ENCODE measurements at regions of chr20 and their contacts with region 1.

Region 1: GRCh38 chr20:32902456-32903420 is 44.0 kb downstream of the EFCAB8 start:
- DNase-seq: peak; percentile 89
- H3K4me3 Mint-ChIP-seq: no peak overlapping the region
- H3K27ac Mint-ChIP-seq: no peak overlapping the region
- H3K4me1 Mint-ChIP-seq: peaks cover 6% of the 10 kb centered on the region
- H3K27me3 Mint-ChIP-seq: no peaks in the 10 kb centered on the region

Region 2: GRCh38 chr20:32626859-32627636 is 275.7 kb before region 1 on chr20:
- intact Hi-C with region 1: no loop called
- DNase-seq: no peak
- H3K4me3 Mint-ChIP-seq: no peak overlapping the region
- H3K27ac Mint-ChIP-seq: no peak overlapping the region
- H3K4me1 Mint-ChIP-seq: no peaks in the 10 kb centered on the region
- H3K27me3 Mint-ChIP-seq: peaks cover 3% of the 10 kb centered on the region

Region 3: DNA sequence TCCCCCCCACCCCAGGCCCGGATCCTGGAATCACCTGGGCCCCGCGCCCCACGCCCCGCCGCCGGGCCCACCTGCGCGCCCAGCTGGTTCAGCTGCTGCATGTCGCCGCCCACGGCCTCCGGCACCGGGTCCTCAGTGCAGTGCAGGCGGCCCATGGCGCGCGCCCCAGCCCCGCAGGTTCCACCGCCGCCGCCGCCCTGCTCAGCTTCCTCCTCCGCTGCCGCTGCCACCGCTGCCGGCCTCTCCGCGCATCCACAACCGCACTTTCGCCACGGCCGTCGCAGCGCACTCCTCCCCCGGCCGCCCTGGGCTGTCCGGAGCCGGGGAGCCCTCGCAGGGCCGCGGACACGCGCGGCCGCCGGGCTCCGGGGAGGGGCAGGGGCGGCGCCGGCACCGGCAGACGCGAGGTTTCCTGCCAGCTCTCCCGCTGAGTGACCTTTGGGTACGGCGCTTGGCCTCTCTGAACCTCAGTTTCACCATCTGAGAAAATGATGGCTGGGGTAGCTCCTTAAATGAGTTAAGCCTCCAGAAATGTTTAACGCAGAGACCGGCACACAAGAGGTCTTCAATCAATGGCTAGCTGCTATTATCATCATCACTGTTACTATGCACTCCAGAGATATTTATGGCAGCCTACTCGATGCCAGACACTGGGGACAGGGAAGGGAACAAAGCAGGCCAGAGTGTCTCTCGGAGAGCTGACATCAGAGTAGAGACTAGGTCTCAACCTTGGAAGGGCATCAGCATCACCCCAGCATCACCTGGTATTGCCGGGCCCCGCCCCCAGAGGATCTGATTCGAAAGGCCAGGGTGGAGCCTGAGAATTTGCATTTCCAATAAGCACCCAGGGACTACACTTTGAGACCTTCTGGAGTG is 159.3 kb before region 1 on chr20 and contains the start of gene COMMD7:
- intact Hi-C with region 1: no loop called
- DNase-seq: peak; percentile 92
- H3K4me3 Mint-ChIP-seq: peak within 1 kb of the TSS; percentile 93
- H3K27ac Mint-ChIP-seq: peak within 1 kb of the TSS; percentile 99
- H3K4me1 Mint-ChIP-seq: peaks cover 32% of the 10 kb centered on the region
- H3K27me3 Mint-ChIP-seq: no peaks in the 10 kb centered on the region
- total RNA-seq, gene COMMD7: 36.3 and 37.7 TPM in 2 replicates

Region 4: DNA sequence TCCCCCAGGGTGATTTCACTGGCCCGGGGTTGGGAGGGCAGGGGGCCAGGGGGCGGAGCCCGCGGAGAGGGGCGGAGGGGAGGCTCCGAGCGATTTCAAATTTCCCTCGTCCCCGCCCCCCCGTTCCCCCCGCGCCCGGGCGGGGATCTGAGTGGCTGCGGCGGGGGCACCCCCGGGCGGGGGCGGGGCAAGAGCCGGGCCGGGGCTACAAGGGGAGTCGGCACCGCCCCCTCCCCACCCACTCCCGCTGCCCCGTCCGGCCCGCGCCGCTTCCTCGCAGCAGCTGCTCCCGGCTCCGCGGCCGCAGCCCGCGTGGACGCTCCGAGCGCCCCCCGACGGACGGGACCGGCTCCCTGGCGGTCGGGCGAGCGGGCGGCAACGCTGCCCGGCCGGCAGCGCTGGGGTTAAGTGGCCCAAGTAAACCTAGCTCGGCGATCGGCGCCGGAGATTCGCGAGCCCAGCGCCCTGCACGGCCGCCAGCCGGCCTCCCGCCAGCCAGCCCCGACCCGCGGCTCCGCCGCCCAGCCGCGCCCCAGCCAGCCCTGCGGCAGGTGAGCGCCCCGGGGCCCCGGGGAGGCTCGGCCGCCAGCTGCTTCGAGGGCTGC is 140.5 kb before region 1 on chr20 and contains the start of gene DNMT3B:
- intact Hi-C with region 1: no loop called
- DNase-seq: peak; percentile 93
- H3K4me3 Mint-ChIP-seq: peak within 1 kb of the TSS; percentile 88
- H3K27ac Mint-ChIP-seq: peak within 1 kb of the TSS; percentile 71
- H3K4me1 Mint-ChIP-seq: peaks cover 11% of the 10 kb centered on the region
- H3K27me3 Mint-ChIP-seq: peaks cover 12% of the 10 kb centered on the region
- total RNA-seq, gene DNMT3B: 1.1 and 1.3 TPM in 2 replicates

Region 5: GRCh38 chr20:32946629-32947028 is 43.9 kb after region 1 on chr20:
- intact Hi-C with region 1: loop called (anchors 1 kb)
- DNase-seq: no peak
- H3K4me3 Mint-ChIP-seq: no peak overlapping the region
- H3K27ac Mint-ChIP-seq: no peak overlapping the region
- H3K4me1 Mint-ChIP-seq: peaks cover 28% of the 10 kb centered on the region
- H3K27me3 Mint-ChIP-seq: peaks cover 2% of the 10 kb centered on the region

Region 6: GRCh38 chr20:33005132-33005566 is 102.4 kb after region 1 on chr20:
- intact Hi-C with region 1: loop called (anchors 1 kb)
- DNase-seq: peak; percentile 74
- H3K4me3 Mint-ChIP-seq: no peak overlapping the region
- H3K27ac Mint-ChIP-seq: no peak overlapping the region
- H3K4me1 Mint-ChIP-seq: peaks cover 1% of the 10 kb centered on the region
- H3K27me3 Mint-ChIP-seq: no peaks in the 10 kb centered on the region

Region 7: DNA sequence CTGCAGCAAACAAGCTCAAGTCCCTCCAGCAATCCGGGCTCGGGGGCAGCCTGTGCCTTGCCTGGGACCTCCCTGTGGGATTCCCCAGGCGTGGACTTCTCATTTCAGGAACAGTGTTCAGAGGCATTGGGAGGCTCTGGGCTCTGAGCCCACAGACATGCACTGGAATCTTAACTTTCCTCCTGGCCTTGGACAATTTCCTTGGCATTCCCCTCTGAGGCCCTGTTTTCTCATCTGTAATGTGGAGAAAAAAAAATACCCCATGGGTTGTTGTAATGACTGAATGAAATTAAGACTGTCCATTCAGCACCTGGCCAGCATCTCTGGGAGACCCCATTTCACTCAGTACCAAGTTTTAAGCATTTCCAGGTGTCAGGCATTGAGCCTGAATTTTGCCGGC is 194.3 kb after region 1 on chr20:
- intact Hi-C with region 1: loop called (anchors 2 kb)
- DNase-seq: no peak
- H3K4me3 Mint-ChIP-seq: no peak overlapping the region
- H3K27ac Mint-ChIP-seq: no peak overlapping the region
- H3K4me1 Mint-ChIP-seq: no peaks in the 10 kb centered on the region
- H3K27me3 Mint-ChIP-seq: no peaks in the 10 kb centered on the region

Region 8: GRCh38 chr20:33291830-33292355 is 389.2 kb after region 1 on chr20:
- intact Hi-C with region 1: loop called (anchors 1 kb)
- DNase-seq: peak; percentile 90
- H3K4me3 Mint-ChIP-seq: no peak overlapping the region
- H3K27ac Mint-ChIP-seq: no peak overlapping the region
- H3K4me1 Mint-ChIP-seq: no peaks in the 10 kb centered on the region
- H3K27me3 Mint-ChIP-seq: peaks cover 6% of the 10 kb centered on the region